Natural killer cell (primary cell): ENCODE measurements at regions of chrX and their contacts with region 1.

Region 1: GRCh38 chrX:14029425-14030173 is at the start of gene GEMIN8:
- DNase-seq: peak; percentile 79 to 92
- ATAC-seq: peak; percentile 93 to 99 (median 97)
- H3K4me3 ChIP-seq: peak within 1 kb of the TSS; percentile 77
- H3K4me3 Mint-ChIP-seq: peak within 1 kb of the TSS; percentile 97
- H3K27ac ChIP-seq: peak within 1 kb of the TSS; percentile 91
- H3K27ac Mint-ChIP-seq: peak within 1 kb of the TSS; percentile 89 to 93
- H3K4me1 ChIP-seq: peaks cover 9% of the 10 kb centered on the region
- H3K4me1 Mint-ChIP-seq: peaks cover 12 to 18% of the 10 kb centered on the region in 2 donors
- H3K27me3 ChIP-seq: no peaks in the 10 kb centered on the region
- H3K27me3 Mint-ChIP-seq: peaks cover 6 to 10% of the 10 kb centered on the region in 2 donors
- CTCF ChIP-seq: no peak
- total RNA-seq, gene GEMIN8: 8.8 to 13.4 (median 9.7) TPM

Region 2: DNA sequence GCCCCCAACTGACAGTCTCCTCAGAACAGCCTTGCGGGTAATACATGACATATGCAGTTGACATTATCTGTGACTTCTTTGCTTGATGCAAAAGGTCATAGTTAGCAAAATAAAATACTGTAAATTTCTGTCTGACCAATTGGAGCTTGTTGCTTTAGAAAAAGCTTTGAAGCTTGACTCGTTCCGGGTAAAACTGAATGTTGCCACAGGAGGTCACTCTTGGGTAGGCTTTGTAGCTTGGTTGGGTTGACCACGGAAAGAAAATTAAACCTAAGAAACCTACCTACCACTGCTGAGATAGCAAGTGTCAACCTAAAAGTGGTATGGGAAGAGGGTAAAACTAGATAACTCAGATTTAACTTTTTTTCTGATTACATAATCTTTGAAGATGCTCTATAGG is 1215.2 kb before region 1 on chrX:
- intact Hi-C with region 1: loop called (anchors 10 kb)
- DNase-seq: peak in 1 of 2 donors; percentile 64
- ATAC-seq: peak; percentile 62 to 78 (median 65)
- H3K4me3 ChIP-seq: no peak overlapping the region
- H3K4me3 Mint-ChIP-seq: no peak overlapping the region
- H3K27ac ChIP-seq: no peak overlapping the region
- H3K27ac Mint-ChIP-seq: no peak overlapping the region
- H3K4me1 ChIP-seq: no peaks in the 10 kb centered on the region
- H3K4me1 Mint-ChIP-seq: peaks cover 5% of the 10 kb centered on the region in 2 donors
- H3K27me3 ChIP-seq: no peaks in the 10 kb centered on the region
- H3K27me3 Mint-ChIP-seq: no peaks in the 10 kb centered on the region
- CTCF ChIP-seq: peak; percentile 48

Region 3: DNA sequence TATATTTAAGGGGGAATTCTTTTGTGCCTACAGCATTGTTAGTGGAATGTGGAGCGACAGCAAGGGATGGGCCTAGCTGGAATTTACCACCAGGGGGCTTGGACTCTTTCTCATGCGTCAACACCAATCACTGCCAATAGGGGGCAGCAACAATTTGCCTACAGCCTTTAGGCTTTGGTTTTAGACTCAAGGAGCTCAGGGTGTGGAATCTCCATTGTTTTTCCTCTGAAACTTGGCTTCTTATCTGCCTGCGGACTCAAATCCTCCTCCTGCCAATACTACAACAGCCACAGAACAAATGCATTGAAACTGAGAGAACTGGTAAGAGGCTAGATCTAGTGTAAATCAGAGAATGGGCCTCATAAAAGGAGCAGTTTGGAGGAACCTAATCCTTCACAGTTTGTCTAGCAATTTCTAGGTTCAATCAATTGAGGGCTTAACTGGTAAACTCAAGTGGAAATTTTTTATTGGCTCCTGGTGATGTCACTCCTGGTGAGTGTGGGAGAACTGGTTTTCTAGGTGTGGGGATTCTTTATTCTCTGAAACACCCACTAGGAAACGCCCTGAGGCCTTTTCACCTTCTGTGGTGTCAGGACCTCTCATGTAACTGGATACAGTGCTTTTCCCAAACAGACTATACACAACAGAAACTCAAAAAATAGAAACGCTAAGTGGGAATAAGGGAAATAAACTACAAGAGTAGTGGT is 1082.6 kb before region 1 on chrX:
- intact Hi-C with region 1: loop called (anchors 5 kb)
- DNase-seq: peak; percentile 60 to 88
- ATAC-seq: peak; percentile 54 to 72 (median 62)
- H3K4me3 ChIP-seq: no peak overlapping the region
- H3K4me3 Mint-ChIP-seq: peak overlapping the region; percentile 55
- H3K27ac ChIP-seq: peak overlapping the region; percentile 93
- H3K27ac Mint-ChIP-seq: peak overlapping the region; percentile 95 to 97
- H3K4me1 ChIP-seq: peaks cover 53% of the 10 kb centered on the region
- H3K4me1 Mint-ChIP-seq: peaks cover 32 to 52% of the 10 kb centered on the region in 2 donors
- H3K27me3 ChIP-seq: no peaks in the 10 kb centered on the region
- H3K27me3 Mint-ChIP-seq: peaks cover 0 to 3% of the 10 kb centered on the region in 2 donors
- CTCF ChIP-seq: peak; percentile 91

Region 4: GRCh38 chrX:13506574-13506973 is 523.0 kb before region 1 on chrX:
- intact Hi-C with region 1: loop called (anchors 1 kb)
- DNase-seq: peak; percentile 19 to 76
- ATAC-seq: no peak
- H3K4me3 ChIP-seq: no peak overlapping the region
- H3K4me3 Mint-ChIP-seq: no peak overlapping the region
- H3K27ac ChIP-seq: no peak overlapping the region
- H3K27ac Mint-ChIP-seq: no peak overlapping the region
- H3K4me1 ChIP-seq: no peaks in the 10 kb centered on the region
- H3K4me1 Mint-ChIP-seq: no peaks in the 10 kb centered on the region
- H3K27me3 ChIP-seq: no peaks in the 10 kb centered on the region
- H3K27me3 Mint-ChIP-seq: peaks cover 0 to 23% of the 10 kb centered on the region in 2 donors
- CTCF ChIP-seq: peak; percentile 70

Region 5: DNA sequence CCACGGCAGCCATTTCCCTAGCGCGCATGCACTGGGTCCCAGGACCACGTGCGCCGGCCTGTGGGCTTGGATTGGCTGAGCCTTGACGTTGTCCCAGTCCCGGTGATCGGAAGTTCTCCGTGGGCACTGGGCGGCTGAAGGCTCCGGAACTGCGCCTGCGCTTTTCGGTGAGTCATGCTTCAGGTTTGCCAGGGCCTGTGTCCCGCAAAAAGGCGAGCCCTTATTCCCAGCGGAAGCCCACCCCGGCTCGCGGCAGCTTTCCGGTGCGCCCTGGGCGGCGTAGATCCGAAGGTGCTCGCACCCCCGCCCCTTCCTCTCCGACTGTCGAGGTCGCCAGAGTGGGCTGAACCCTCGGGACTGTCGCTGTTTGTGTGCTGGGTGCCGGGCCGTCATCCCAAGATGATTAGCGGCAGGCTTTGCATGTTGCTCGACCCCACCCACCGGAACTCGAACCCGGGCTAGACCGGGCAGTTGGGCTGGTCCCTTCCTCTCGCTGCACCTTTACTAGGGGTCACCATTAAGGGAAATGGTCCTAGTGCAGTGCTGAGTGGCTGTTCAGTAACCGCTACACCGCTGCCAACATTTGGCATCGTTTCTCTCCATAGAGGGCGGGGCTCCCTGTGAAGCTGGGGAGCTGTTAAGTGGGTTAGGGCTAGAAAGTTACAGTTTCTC is 376.4 kb before region 1 on chrX and contains the start of gene TCEANC:
- intact Hi-C with region 1: loop called (anchors 1 kb)
- DNase-seq: peak; percentile 86 to 96
- ATAC-seq: peak; percentile 90 to 98 (median 96)
- H3K4me3 ChIP-seq: peak within 1 kb of the TSS; percentile 81
- H3K4me3 Mint-ChIP-seq: peak within 1 kb of the TSS; percentile 90
- H3K27ac ChIP-seq: peak within 1 kb of the TSS; percentile 97
- H3K27ac Mint-ChIP-seq: peak within 1 kb of the TSS; percentile 88 to 94
- H3K4me1 ChIP-seq: peaks cover 10% of the 10 kb centered on the region
- H3K4me1 Mint-ChIP-seq: peaks cover 4 to 30% of the 10 kb centered on the region in 2 donors
- H3K27me3 ChIP-seq: no peaks in the 10 kb centered on the region
- H3K27me3 Mint-ChIP-seq: peaks cover 0 to 6% of the 10 kb centered on the region in 2 donors
- CTCF ChIP-seq: no peak
- total RNA-seq, gene TCEANC: 11.2 to 17.8 (median 13.4) TPM

Region 6: GRCh38 chrX:13658602-13659001 is 371.0 kb before region 1 on chrX:
- intact Hi-C with region 1: loop called (anchors 1 kb)
- DNase-seq: peak in 1 of 2 donors; percentile 78
- ATAC-seq: peak; percentile 63 to 80 (median 64)
- H3K4me3 ChIP-seq: no peak overlapping the region
- H3K4me3 Mint-ChIP-seq: peak overlapping the region; percentile 35
- H3K27ac ChIP-seq: peak overlapping the region; percentile 57
- H3K27ac Mint-ChIP-seq: peak overlapping the region; percentile 82 to 83
- H3K4me1 ChIP-seq: peaks cover 5% of the 10 kb centered on the region
- H3K4me1 Mint-ChIP-seq: peaks cover 7 to 29% of the 10 kb centered on the region in 2 donors
- H3K27me3 ChIP-seq: no peaks in the 10 kb centered on the region
- H3K27me3 Mint-ChIP-seq: no peaks in the 10 kb centered on the region
- CTCF ChIP-seq: peak; percentile 48

Region 7: GRCh38 chrX:13750204-13750603 is 279.4 kb before region 1 on chrX:
- intact Hi-C with region 1: loop called (anchors 1 kb)
- DNase-seq: peak in 1 of 2 donors; percentile 63
- ATAC-seq: peak in 1 of 3 donors; percentile 60
- H3K4me3 ChIP-seq: no peak overlapping the region
- H3K4me3 Mint-ChIP-seq: no peak overlapping the region
- H3K27ac ChIP-seq: no peak overlapping the region
- H3K27ac Mint-ChIP-seq: peak overlapping the region; percentile 68 to 77
- H3K4me1 ChIP-seq: peaks cover 6% of the 10 kb centered on the region
- H3K4me1 Mint-ChIP-seq: peaks cover 19 to 36% of the 10 kb centered on the region in 2 donors
- H3K27me3 ChIP-seq: no peaks in the 10 kb centered on the region
- H3K27me3 Mint-ChIP-seq: no peaks in the 10 kb centered on the region
- CTCF ChIP-seq: no peak

Region 8: GRCh38 chrX:13938051-13938828 is 91.4 kb before region 1 on chrX:
- intact Hi-C with region 1: no loop called
- DNase-seq: no peak
- ATAC-seq: peak in 1 of 3 donors; percentile 42
- H3K4me3 ChIP-seq: peak overlapping the region; percentile 3
- H3K4me3 Mint-ChIP-seq: peak overlapping the region; percentile 25
- H3K27ac ChIP-seq: no peak overlapping the region
- H3K27ac Mint-ChIP-seq: no peak overlapping the region
- H3K4me1 ChIP-seq: peaks cover 9% of the 10 kb centered on the region
- H3K4me1 Mint-ChIP-seq: no peaks in the 10 kb centered on the region
- H3K27me3 ChIP-seq: peaks cover 3% of the 10 kb centered on the region
- H3K27me3 Mint-ChIP-seq: peaks cover 12 to 63% of the 10 kb centered on the region in 2 donors
- CTCF ChIP-seq: no peak

Region 9: DNA sequence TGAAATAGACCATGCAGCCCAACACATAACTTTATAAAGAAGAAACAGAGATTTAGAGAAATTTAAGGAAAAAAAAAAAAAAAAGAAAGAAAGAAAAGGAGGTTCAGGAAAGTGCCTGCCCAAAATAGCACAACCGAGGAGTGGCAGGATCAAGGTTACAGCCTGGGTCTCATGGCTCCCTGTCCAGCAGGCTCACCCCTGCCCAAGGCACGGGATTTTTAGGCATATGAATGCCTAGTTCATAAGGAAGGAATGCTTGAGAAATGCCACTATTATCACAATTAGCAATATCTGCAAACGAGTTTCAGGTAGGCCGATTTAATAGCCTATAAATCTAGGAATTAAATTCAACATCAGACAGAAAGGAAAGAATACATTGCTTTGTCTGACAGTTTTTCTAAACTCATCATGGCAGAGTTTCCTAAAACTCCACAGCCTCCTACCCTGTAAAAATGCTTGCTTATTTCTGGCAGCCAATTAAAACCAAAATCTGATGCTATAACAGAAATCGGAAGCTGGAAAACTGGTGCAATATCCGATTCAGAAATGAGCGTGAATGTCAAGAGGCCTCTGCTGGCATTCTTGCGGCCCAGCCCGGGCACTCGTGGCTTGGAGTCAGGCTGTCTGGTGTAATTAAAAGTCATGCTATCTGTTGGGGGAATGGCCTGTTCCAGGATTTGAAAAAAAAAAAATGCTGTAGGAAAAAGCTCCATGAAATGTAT is 63.4 kb before region 1 on chrX:
- intact Hi-C with region 1: no loop called
- DNase-seq: no peak
- ATAC-seq: no peak
- H3K4me3 ChIP-seq: no peak overlapping the region
- H3K4me3 Mint-ChIP-seq: no peak overlapping the region
- H3K27ac ChIP-seq: no peak overlapping the region
- H3K27ac Mint-ChIP-seq: no peak overlapping the region
- H3K4me1 ChIP-seq: no peaks in the 10 kb centered on the region
- H3K4me1 Mint-ChIP-seq: no peaks in the 10 kb centered on the region
- H3K27me3 ChIP-seq: no peaks in the 10 kb centered on the region
- H3K27me3 Mint-ChIP-seq: peaks cover 3 to 10% of the 10 kb centered on the region in 2 donors
- CTCF ChIP-seq: no peak

Region 10: GRCh38 chrX:14554131-14554715 is 524.6 kb after region 1 on chrX:
- intact Hi-C with region 1: no loop called
- DNase-seq: no peak
- ATAC-seq: no peak
- H3K4me3 ChIP-seq: no peak overlapping the region
- H3K4me3 Mint-ChIP-seq: no peak overlapping the region
- H3K27ac ChIP-seq: no peak overlapping the region
- H3K27ac Mint-ChIP-seq: no peak overlapping the region
- H3K4me1 ChIP-seq: no peaks in the 10 kb centered on the region
- H3K4me1 Mint-ChIP-seq: no peaks in the 10 kb centered on the region
- H3K27me3 ChIP-seq: no peaks in the 10 kb centered on the region
- H3K27me3 Mint-ChIP-seq: no peaks in the 10 kb centered on the region
- CTCF ChIP-seq: no peak